ENCODE measurements at regions of chr11 and their contacts with region 1.

Region 1: DNA sequence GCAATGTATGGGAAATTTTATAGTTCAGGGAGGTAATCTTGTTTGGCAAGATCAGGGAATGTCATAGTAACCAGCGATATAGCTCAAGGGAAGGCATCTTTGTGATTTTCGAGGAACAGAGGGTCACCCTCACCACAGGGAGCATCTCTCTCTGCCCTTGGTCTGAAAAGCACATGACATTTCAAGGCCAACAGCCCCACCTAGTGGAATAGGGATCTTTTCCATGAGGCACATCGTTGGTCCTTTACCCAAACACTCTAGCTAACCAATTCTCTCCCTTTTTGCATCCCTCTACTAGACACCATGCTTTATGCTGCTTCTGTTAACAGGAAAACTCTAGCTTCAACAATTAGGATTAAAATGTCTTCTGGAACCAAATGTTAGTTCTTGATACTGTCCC is 179.0 kb downstream of the GRM5 start:
- DNase-seq: peak in 11 of 14 experiments; percentile 2 to 62 (median 8)
- ATAC-seq: no peak
- H3K4me3 ChIP-seq: no peak overlapping the region
- H3K4me3 Mint-ChIP-seq: no peak overlapping the region
- H3K27ac ChIP-seq: no peak overlapping the region
- H3K27ac Mint-ChIP-seq: no peak overlapping the region
- H3K4me1 ChIP-seq: no peaks in the 10 kb centered on the region
- H3K4me1 Mint-ChIP-seq: peaks cover 5% of the 10 kb centered on the region
- H3K27me3 ChIP-seq: no peaks in the 10 kb centered on the region
- H3K27me3 Mint-ChIP-seq: no peaks in the 10 kb centered on the region
- CTCF ChIP-seq: peak; percentile 39

Region 2: DNA sequence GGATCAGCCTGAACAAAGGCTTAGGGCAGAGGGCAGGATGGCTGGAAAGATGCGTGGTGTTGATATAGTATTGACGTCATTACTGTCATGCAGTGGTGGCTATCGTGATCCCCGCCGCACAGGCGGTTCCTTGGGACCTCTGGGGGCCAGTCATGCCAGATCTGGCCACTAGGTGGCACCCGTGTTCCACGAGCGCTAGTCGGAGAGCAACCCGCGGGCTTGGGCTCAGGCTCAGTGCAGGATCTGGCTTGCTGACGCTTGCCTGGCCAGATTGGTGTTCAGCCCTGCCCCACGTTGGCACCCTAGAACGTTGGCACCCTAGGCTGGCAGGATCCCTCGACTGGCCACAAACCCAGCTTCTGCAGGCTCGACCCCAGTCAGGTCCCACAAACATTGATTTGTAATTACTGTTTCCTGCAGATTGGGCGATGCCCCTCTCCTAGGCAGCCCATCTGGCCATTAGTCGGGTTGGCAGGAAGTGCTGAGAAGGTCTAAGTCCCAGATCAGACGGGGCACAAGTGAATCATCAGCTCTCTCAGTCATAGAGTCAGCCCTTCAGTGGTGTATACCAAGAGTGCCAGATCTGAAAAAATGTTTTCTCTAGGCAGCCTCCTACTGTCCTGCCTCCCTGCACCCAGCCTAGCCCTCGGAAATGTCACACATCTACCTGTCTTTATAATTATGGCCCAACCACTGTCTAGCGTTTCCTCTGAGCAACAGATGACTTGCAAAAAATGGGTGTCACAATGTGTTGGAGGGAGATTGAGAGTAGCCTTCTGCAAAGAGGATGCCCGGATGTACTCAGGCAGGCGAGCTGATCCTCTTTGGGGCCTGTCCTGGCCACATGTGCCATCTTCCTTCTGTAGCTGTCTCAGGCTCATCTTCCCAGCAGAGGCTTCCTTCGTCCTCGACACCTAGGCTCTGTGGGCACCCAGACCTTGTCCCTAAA is 1533.8 kb before region 1 on chr11:
- CTCF ChIA-PET with region 1: no interaction called
- POLR2A ChIA-PET with region 1: no interaction called
- intact Hi-C with region 1: loop called in 1 of 2 experiments (anchors 10 kb)
- DNase-seq: peak; percentile 60 to 88 (median 78)
- ATAC-seq: peak; percentile 95
- H3K4me3 ChIP-seq: no peak overlapping the region
- H3K4me3 Mint-ChIP-seq: no peak overlapping the region
- H3K27ac ChIP-seq: no peak overlapping the region
- H3K27ac Mint-ChIP-seq: no peak overlapping the region
- H3K4me1 ChIP-seq: peaks cover 9% of the 10 kb centered on the region
- H3K4me1 Mint-ChIP-seq: peaks cover 12% of the 10 kb centered on the region
- H3K27me3 ChIP-seq: no peaks in the 10 kb centered on the region
- H3K27me3 Mint-ChIP-seq: peaks cover 13% of the 10 kb centered on the region
- CTCF ChIP-seq: peak; percentile 96

Region 3: DNA sequence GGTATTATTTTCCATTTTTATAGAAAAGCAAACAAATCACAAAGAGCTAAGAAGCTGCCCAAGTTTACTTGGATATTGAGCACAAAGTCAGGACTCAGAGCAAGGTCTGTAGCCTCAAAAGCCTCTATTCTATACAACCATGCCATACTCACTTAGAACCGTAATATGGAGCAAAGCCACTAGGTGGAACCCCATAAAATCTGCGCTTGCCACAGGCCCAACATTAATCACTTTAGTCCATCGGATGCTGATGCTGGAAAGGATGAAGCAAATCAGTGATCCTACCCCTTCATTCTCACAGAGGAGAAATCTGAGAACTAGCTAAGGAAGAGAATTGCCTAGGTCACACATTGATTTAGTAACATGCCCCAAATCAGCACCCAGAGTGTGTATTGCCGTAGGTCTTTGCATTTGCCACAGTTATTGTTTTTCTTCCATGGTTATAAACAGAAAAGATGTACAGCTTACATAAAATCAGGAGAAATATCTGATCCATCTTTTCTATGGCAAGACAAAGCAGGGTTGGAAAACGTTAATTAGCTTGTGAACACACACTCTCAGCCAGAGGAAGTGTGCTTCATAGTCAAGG is 654.8 kb before region 1 on chr11:
- CTCF ChIA-PET with region 1: no interaction called
- POLR2A ChIA-PET with region 1: no interaction called
- intact Hi-C with region 1: loop called in 1 of 2 experiments (anchors 5 kb)
- DNase-seq: peak in 4 of 14 experiments; percentile 9 to 57 (median 37)
- ATAC-seq: peak; percentile 60
- H3K4me3 ChIP-seq: no peak overlapping the region
- H3K4me3 Mint-ChIP-seq: no peak overlapping the region
- H3K27ac ChIP-seq: no peak overlapping the region
- H3K27ac Mint-ChIP-seq: no peak overlapping the region
- H3K4me1 ChIP-seq: no peaks in the 10 kb centered on the region
- H3K4me1 Mint-ChIP-seq: no peaks in the 10 kb centered on the region
- H3K27me3 ChIP-seq: no peaks in the 10 kb centered on the region
- H3K27me3 Mint-ChIP-seq: no peaks in the 10 kb centered on the region
- CTCF ChIP-seq: peak; percentile 72

Region 4: DNA sequence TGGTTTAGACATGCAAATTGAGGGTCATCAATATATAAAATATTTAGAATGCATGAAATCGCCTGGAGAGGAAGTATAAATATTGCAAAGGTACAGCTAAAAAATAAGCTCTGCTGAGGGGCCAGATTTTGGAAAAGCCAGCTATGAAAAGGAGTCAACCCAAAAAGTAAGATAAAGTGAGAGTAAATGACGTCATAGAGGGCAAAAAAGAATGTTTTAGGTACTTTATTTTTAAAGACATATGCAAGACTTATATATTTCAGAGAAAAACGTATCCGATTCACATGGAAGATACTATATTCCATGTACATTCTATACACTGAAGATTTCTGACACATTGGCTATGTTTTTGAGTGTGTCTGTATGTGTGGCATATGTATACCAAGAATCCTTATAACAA is 165.4 kb after region 1 on chr11:
- CTCF ChIA-PET with region 1: no interaction called
- POLR2A ChIA-PET with region 1: no interaction called
- intact Hi-C with region 1: no loop called
- DNase-seq: no peak
- ATAC-seq: no peak
- H3K4me3 ChIP-seq: no peak overlapping the region
- H3K4me3 Mint-ChIP-seq: no peak overlapping the region
- H3K27ac ChIP-seq: no peak overlapping the region
- H3K27ac Mint-ChIP-seq: no peak overlapping the region
- H3K4me1 ChIP-seq: no peaks in the 10 kb centered on the region
- H3K4me1 Mint-ChIP-seq: no peaks in the 10 kb centered on the region
- H3K27me3 ChIP-seq: no peaks in the 10 kb centered on the region
- H3K27me3 Mint-ChIP-seq: peaks cover under 1% of the 10 kb centered on the region
- CTCF ChIP-seq: no peak

Measured in CD4-positive, alpha-beta T cell (primary cell).